Vagina (tissue), 2 donors: ENCODE measurements at regions of chr1 and their contacts with region 1.

Region 1: DNA sequence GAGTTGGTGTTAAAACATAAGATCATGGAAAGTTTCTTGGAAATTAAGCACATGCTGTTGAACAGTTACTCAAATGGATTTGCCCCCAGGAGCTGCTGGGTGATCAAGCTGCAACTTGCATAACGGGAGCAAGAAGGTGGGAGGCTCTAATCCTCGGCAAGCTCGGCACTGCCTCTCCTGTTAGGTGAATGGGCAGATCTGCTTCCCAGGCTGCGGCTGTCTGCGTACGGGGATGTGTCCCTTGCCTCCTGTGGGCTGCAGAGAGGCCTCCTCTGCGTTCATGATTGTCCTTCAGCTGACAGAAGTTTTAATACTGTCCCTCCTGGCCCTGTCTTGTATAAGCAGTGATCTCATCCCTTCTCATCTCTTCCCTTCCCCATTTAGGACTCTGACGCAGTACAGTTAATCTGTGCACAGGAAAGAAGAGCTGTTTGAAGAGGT is 36.7 kb downstream of the ATP1A1 start:
- DNase-seq: peak in 1 of 2 donors; percentile 90
- H3K4me3 ChIP-seq: no peak overlapping the region
- H3K27ac ChIP-seq: peak overlapping the region; percentile 33
- H3K4me1 ChIP-seq: no peaks in the 10 kb centered on the region
- H3K27me3 ChIP-seq: no peaks in the 10 kb centered on the region
- CTCF ChIP-seq: no peak
- POLR2A ChIP-seq: no peak

Region 2: GRCh38 chr1:114779731-114780130 is 1630.0 kb before region 1 on chr1:
- intact Hi-C with region 1: loop called (anchors 5 kb)
- DNase-seq: no peak
- H3K4me3 ChIP-seq: peak overlapping the region; percentile 73 to 77
- H3K27ac ChIP-seq: peak overlapping the region; percentile 88
- H3K4me1 ChIP-seq: peaks cover 19% of the 10 kb centered on the region
- H3K27me3 ChIP-seq: no peaks in the 10 kb centered on the region
- CTCF ChIP-seq: no peak
- POLR2A ChIP-seq: no peak

Region 3: DNA sequence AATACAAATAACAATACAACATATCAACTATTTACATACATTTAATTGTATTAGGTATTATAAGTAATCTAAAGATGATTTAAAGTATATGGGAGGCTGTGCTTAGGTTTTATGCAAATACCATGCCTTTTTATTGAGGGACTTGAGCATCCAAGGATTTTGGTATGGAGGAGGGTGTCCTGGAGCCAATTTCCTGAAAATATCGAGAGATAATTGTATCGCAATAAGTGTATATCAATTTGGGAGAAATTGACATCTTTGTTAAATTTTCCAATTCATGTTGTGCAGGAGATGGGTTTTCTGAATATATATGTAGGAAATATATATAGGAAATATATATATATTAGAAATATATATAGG is 26.8 kb after region 1 on chr1:
- intact Hi-C with region 1: no loop called
- DNase-seq: no peak
- H3K4me3 ChIP-seq: no peak overlapping the region
- H3K27ac ChIP-seq: no peak overlapping the region
- H3K4me1 ChIP-seq: no peaks in the 10 kb centered on the region
- H3K27me3 ChIP-seq: no peaks in the 10 kb centered on the region
- CTCF ChIP-seq: no peak
- POLR2A ChIP-seq: no peak